Endothelial cell of umbilical vein (primary cell): ENCODE measurements at regions of chr10 and their contacts with region 1.

Region 1: DNA sequence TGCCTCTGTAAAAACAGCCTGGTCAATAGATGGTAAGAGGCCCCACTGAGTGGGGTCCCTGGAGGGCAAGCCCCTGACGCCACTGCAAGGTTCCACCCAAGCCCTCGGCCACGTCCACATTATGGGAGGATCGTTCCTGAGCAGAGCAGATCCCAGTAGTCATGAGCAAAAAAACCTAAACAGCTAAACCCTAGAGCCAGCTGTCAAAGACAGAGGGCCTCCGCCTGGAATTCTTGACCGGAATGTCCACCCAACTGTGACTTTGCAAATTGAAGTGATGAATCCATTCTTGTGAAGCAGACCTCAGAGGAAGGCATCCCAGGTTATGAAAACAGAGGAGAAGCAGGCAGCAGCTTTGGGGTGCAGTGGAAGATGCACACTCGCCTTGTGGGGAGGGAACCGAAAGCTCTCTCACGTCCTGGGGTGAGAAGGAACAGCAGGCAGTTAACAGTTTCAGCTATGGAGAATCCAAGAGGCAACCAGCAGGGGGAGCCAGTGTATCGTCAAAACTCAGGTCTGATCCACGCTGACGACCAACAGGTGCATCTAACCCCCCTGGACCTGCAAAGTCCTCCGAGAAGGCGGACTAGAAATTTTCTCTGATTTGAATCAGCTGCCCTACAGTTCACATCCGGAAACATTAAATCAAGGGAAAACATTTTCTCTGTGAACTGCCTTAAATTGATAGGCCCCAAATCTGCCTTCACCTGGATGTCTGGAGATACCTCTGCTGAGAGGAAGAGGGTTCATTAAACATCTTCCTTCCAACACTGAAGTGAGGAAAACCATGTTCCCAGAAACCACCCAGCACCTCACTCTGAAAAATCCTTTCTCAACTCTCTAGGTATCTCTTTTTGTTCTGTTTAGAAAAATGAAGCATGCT is 139.1 kb upstream of the PFKP start:
- DNase-seq: peak; percentile 64
- H3K4me3 ChIP-seq: no peak overlapping the region
- H3K27ac ChIP-seq: no peak overlapping the region
- H3K4me1 ChIP-seq: peaks cover 15% of the 10 kb centered on the region
- H3K27me3 ChIP-seq: no peaks in the 10 kb centered on the region
- CTCF ChIP-seq: peak; percentile 80 to 85
- POLR2A ChIP-seq: no peak

Region 2: GRCh38 chr10:2839081-2839725 is 89.0 kb before region 1 on chr10:
- CTCF ChIA-PET with region 1: interaction called, 13 read pairs
- POLR2A ChIA-PET with region 1: no interaction called
- dilution Hi-C with region 1: no loop called
- intact Hi-C with region 1: loop called (anchors 1 kb)
- DNase-seq: peak; percentile 48
- H3K4me3 ChIP-seq: no peak overlapping the region
- H3K27ac ChIP-seq: no peak overlapping the region
- H3K4me1 ChIP-seq: no peaks in the 10 kb centered on the region
- H3K27me3 ChIP-seq: peaks cover 0 to 3% of the 10 kb centered on the region in 2 experiments
- CTCF ChIP-seq: peak; percentile 76 to 78
- POLR2A ChIP-seq: no peak

Region 3: GRCh38 chr10:2913474-2913873 is 14.7 kb before region 1 on chr10:
- CTCF ChIA-PET with region 1: interaction called, 16 read pairs
- POLR2A ChIA-PET with region 1: no interaction called
- dilution Hi-C with region 1: no loop called
- intact Hi-C with region 1: no loop called
- DNase-seq: no peak
- H3K4me3 ChIP-seq: no peak overlapping the region
- H3K27ac ChIP-seq: no peak overlapping the region
- H3K4me1 ChIP-seq: peaks cover 5% of the 10 kb centered on the region
- H3K27me3 ChIP-seq: peaks cover 0 to 2% of the 10 kb centered on the region in 2 experiments
- CTCF ChIP-seq: no peak
- POLR2A ChIP-seq: no peak

Region 4: GRCh38 chr10:2978111-2978510 is 49.9 kb after region 1 on chr10:
- CTCF ChIA-PET with region 1: interaction called, 17 read pairs
- POLR2A ChIA-PET with region 1: no interaction called
- dilution Hi-C with region 1: no loop called
- intact Hi-C with region 1: loop called (anchors 1 kb)
- DNase-seq: peak; percentile 61
- H3K4me3 ChIP-seq: no peak overlapping the region
- H3K27ac ChIP-seq: no peak overlapping the region
- H3K4me1 ChIP-seq: no peaks in the 10 kb centered on the region
- H3K27me3 ChIP-seq: no peaks in the 10 kb centered on the region
- CTCF ChIP-seq: peak; percentile 16 to 32
- POLR2A ChIP-seq: no peak

Region 5: DNA sequence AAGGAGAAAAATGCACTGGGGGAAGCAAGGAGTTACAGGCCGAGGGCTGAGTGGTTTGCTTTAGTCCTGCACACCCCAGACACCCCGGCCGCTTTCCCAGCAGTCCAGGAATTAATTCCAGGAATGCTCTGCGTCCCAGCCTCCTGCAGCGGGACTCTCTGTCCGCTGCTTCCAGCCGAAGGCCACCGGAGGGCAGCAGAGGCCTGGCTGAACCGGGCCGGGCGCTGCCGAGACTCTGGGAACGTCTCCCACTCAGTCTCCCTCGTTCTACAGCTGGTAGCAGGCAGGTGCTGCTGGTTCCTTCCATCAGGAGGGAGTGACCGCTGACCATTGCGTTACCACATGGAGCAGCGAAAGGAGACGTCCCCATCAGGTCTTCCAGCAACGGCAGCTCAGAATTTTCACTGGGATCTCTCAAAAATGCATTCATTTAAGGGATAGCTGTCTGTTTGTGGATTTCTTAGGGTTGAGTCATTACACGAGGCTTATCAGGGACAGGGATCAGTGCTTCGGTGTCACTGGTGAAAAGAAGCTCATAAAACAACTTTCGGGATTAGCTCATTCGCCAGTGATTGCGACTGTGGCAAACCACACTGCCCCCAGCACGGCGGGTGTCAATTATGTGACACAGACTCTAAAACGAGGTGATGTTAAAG is 269.3 kb after region 1 on chr10:
- CTCF ChIA-PET with region 1: interaction called, 3 read pairs
- POLR2A ChIA-PET with region 1: no interaction called
- dilution Hi-C with region 1: no loop called
- intact Hi-C with region 1: loop called (anchors 5 kb)
- DNase-seq: peak; percentile 86
- H3K4me3 ChIP-seq: peak overlapping the region in 2 of 3 experiments; percentile 1 to 6
- H3K27ac ChIP-seq: no peak overlapping the region
- H3K4me1 ChIP-seq: peaks cover 12% of the 10 kb centered on the region
- H3K27me3 ChIP-seq: peaks cover 0 to 6% of the 10 kb centered on the region in 2 experiments
- CTCF ChIP-seq: peak; percentile 93 to 96
- POLR2A ChIP-seq: no peak